ENCODE measurements at regions of chr11 and their contacts with region 1.

Region 1: DNA sequence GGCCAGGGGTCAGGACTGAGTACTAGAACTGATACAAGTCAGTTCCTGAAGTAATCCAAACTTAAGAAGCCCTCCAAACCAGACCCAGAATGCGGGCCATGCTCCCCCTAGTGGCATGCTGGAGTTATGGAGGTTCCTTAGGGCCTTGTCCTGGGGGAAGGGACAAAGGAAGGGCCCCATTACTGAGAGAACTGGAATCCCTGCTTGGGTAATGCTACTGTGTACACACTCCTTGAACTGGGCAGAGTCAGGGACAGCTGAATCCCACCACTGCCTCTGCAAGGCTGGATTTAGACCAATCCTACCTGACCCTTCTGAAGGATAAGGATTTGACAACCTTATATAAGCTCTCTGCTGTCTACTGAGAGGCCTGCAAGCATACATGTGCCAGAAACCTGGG is 97.3 kb upstream of the AKIP1 start:
- DNase-seq: peak; percentile 91
- H3K4me3 Mint-ChIP-seq: no peak overlapping the region
- H3K27ac Mint-ChIP-seq: no peak overlapping the region
- H3K4me1 Mint-ChIP-seq: peaks cover 10% of the 10 kb centered on the region
- H3K27me3 Mint-ChIP-seq: no peaks in the 10 kb centered on the region
- CTCF ChIP-seq: peak; percentile 67

Region 2: GRCh38 chr11:8682303-8683114 is 131.1 kb before region 1 on chr11 and contains the starts of genes RPL27A and TRIM66:
- CTCF ChIA-PET with region 1: interaction called, 4 read pairs
- POLR2A ChIA-PET with region 1: interaction called, 66 read pairs
- intact Hi-C with region 1: no loop called
- DNase-seq: peak; percentile 97
- H3K4me3 Mint-ChIP-seq: peak within 1 kb of the TSS; percentile 81
- H3K27ac Mint-ChIP-seq: peak within 1 kb of the TSS; percentile 98
- H3K4me1 Mint-ChIP-seq: peaks cover 34% of the 10 kb centered on the region
- H3K27me3 Mint-ChIP-seq: no peaks in the 10 kb centered on the region
- CTCF ChIP-seq: no peak
- total RNA-seq, gene RPL27A: 1,377 TPM in 2 replicates
- total RNA-seq, gene TRIM66: 27.3 and 27.4 TPM in 2 replicates

Region 3: GRCh38 chr11:8744423-8744822 is 69.2 kb before region 1 on chr11:
- CTCF ChIA-PET with region 1: interaction called, 10 read pairs
- POLR2A ChIA-PET with region 1: interaction called, 13 read pairs
- intact Hi-C with region 1: no loop called
- DNase-seq: peak; percentile 81
- H3K4me3 Mint-ChIP-seq: no peak overlapping the region
- H3K27ac Mint-ChIP-seq: no peak overlapping the region
- H3K4me1 Mint-ChIP-seq: peaks cover 9% of the 10 kb centered on the region
- H3K27me3 Mint-ChIP-seq: no peaks in the 10 kb centered on the region
- CTCF ChIP-seq: no peak

Region 4: GRCh38 chr11:8777907-8778767 is 35.5 kb before region 1 on chr11:
- CTCF ChIA-PET with region 1: interaction called, 10 read pairs
- POLR2A ChIA-PET with region 1: interaction called, 9 read pairs
- intact Hi-C with region 1: no loop called
- DNase-seq: peak; percentile 51
- H3K4me3 Mint-ChIP-seq: no peak overlapping the region
- H3K27ac Mint-ChIP-seq: no peak overlapping the region
- H3K4me1 Mint-ChIP-seq: peaks cover 37% of the 10 kb centered on the region
- H3K27me3 Mint-ChIP-seq: no peaks in the 10 kb centered on the region
- CTCF ChIP-seq: no peak

Region 5: DNA sequence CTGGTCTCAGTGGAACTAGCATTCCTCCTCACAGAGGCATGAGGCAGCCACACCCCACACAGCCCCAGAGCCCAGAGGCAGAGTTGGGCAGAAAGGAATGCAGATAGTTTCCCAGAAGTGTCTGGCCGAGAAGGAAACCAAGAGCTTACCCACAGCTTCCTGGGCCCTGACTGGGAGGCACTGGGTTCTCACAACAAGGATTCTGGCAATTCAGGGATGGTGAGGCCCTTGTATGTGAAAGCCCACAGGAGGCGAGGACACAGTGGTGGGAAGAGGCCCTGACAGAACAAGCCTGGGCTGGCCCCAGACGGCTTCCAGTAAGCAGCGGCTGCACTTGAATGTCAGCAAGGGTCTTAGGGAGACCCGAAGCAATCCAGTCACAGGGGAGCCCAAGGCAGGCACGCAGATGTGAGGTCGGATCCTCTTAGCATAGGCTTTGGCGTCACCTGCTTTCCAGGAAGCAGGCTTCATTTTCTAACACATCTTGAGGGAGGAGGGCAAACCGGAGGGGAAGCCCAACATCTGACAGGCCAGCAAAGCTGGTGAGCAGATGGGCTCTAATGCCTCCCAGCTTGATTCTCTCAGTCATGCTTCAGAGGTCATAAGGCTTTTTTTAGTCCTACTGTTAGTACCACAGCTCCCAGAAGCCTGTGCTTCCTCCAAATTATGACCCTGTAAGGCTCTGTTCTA is 19.1 kb after region 1 on chr11:
- CTCF ChIA-PET with region 1: interaction called, 11 read pairs
- POLR2A ChIA-PET with region 1: interaction called, 10 read pairs
- intact Hi-C with region 1: no loop called
- DNase-seq: peak; percentile 79
- H3K4me3 Mint-ChIP-seq: peak overlapping the region; percentile 35
- H3K27ac Mint-ChIP-seq: peak overlapping the region; percentile 98
- H3K4me1 Mint-ChIP-seq: peaks cover 27% of the 10 kb centered on the region
- H3K27me3 Mint-ChIP-seq: no peaks in the 10 kb centered on the region
- CTCF ChIP-seq: no peak

Region 6: DNA sequence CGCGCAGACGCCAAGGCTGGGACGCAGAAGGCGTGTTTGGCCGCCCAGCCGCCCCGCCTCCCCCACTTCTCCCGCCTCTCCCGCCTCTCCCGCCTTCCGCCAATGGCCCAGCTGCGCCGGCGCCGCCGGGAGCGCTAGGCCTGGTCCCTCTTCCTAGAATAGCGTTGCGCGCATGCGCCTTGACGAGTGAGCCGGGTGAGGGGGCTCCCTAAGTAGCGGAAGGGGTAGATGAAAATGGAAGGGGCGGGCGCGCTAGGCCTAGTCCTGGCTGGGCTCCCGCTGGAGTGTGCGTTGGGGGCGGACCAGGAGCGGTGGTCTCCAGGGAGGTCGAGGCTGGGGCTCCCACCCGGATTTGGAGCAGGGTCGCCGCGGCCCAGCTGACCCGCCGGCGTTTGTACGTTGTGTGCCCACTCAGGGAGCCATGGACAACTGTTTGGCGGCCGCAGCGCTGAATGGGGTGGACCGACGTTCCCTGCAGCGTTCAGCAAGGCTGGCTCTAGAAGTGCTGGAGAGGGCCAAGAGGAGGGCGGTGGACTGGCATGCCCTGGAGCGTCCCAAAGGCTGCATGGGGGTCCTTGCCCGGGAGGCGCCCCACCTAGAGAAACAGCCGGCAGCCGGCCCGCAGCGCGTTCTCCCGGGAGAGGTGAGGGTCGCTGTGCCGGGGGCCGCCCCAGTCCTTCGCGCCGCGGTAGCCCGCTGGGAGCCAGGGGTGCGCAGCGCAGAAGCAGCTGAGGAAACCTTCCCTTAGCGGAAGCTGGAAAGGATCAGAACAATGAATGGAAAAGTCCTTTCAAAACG is 97.6 kb after region 1 on chr11 and contains the start of gene AKIP1:
- CTCF ChIA-PET with region 1: interaction called, 6 read pairs
- POLR2A ChIA-PET with region 1: interaction called, 9 read pairs
- intact Hi-C with region 1: loop called (anchors 2 kb)
- DNase-seq: peak; percentile 94
- H3K4me3 Mint-ChIP-seq: peak within 1 kb of the TSS; percentile 84
- H3K27ac Mint-ChIP-seq: peak within 1 kb of the TSS; percentile 33
- H3K4me1 Mint-ChIP-seq: peaks cover 34% of the 10 kb centered on the region
- H3K27me3 Mint-ChIP-seq: no peaks in the 10 kb centered on the region
- CTCF ChIP-seq: no peak
- total RNA-seq, gene AKIP1: 64.6 and 67.6 TPM in 2 replicates

Measured in MCF 10A (cell line).